Dendritic cell treated with granulocyte-macrophage colony-stimulating factor and Interleukin-4, amounts not matched to agents 40 ng/mL and 50 ng/mL, for 4 days (primary cell): ENCODE measurements at regions of chr6 and their contacts with region 1.

Region 1: GRCh38 chr6:149271348-149272340 is 45.9 kb upstream of the TAB2 start:
- H3K4me3 Mint-ChIP-seq: peak overlapping the region; percentile 50
- H3K27ac Mint-ChIP-seq: peak overlapping the region; percentile 84
- H3K4me1 Mint-ChIP-seq: peaks cover 74% of the 10 kb centered on the region
- H3K27me3 Mint-ChIP-seq: no peaks in the 10 kb centered on the region

Region 2: DNA sequence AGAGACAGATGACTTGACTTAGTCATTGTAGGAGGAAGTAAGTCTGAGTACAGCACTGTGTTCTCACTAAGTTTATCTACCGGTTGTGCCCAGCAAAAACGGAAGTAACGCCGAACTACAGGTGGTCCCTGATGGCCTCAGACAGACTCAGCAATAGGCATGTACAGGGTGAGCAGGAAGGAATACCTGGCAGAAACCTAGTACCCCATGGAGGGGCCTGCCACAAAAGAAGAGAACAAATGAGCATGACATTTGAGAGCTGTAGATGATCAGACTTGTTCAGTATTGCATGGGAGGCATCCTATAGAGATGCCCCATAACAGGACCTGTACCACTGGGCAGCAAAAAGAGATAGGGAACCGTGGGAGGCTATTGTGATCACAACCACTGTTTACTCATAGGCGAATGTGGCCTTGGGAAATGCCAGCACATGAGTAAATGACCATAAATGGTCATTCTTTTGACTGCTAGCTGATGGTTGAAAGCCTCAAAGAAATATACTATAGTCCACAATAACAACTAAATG is 60.5 kb before region 1 on chr6:
- intact Hi-C with region 1: loop called (anchors 10 kb)
- H3K4me3 Mint-ChIP-seq: no peak overlapping the region
- H3K27ac Mint-ChIP-seq: peak overlapping the region; percentile 75
- H3K4me1 Mint-ChIP-seq: peaks cover 19% of the 10 kb centered on the region
- H3K27me3 Mint-ChIP-seq: no peaks in the 10 kb centered on the region

Region 3: DNA sequence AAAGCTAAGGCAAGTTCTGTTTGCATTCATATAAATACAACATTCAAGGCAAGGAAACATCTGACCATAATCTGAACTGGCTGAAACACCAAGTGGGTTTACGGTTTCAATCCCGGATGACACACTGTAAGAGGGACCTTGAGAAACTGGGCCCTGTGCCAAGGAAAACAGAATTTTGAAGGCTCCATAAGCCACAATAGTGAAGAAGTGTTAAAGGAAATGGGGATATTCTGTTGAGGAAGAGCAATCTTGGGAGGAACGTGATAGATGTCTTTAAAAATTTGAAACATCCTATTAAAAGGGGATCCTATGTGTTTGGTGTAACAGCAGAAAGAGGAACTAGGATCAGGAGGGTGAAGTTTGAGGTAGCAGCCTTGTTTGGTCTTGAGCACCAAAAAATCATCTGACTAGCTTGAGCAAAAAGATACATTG is 36.5 kb before region 1 on chr6:
- intact Hi-C with region 1: loop called (anchors 5 kb)
- H3K4me3 Mint-ChIP-seq: no peak overlapping the region
- H3K27ac Mint-ChIP-seq: peak overlapping the region; percentile 68
- H3K4me1 Mint-ChIP-seq: peaks cover 63% of the 10 kb centered on the region
- H3K27me3 Mint-ChIP-seq: no peaks in the 10 kb centered on the region

Region 4: DNA sequence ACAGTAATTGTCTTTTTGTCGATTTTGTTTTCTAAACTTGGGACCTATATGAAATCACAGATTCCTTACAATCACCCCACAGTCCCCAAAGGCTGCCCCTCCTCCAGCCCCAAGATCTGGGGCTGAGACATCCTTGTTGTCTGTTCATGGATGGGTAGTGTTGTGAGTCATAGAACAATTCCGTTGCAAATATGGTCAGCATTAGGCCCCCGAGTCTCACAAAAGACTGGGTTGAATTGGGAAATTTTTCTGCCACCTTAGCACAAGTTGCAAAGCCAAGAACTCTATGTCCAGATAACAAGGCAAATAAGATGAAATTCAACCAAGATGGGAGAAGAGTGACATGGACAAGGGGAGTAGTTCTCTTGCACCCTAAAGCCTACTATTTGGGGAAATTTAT is 35.3 kb after region 1 on chr6:
- intact Hi-C with region 1: no loop called
- H3K4me3 Mint-ChIP-seq: no peak overlapping the region
- H3K27ac Mint-ChIP-seq: no peak overlapping the region
- H3K4me1 Mint-ChIP-seq: peaks cover 10% of the 10 kb centered on the region
- H3K27me3 Mint-ChIP-seq: peaks cover 2% of the 10 kb centered on the region

Region 5: GRCh38 chr6:149316798-149317655 is 45.4 kb after region 1 on chr6:
- intact Hi-C with region 1: loop called (anchors 5 kb)
- H3K4me3 Mint-ChIP-seq: peak overlapping the region; percentile 86
- H3K27ac Mint-ChIP-seq: peak overlapping the region; percentile 89
- H3K4me1 Mint-ChIP-seq: peaks cover 33% of the 10 kb centered on the region
- H3K27me3 Mint-ChIP-seq: no peaks in the 10 kb centered on the region